PC-3 (cell line): ENCODE measurements at regions of chr9 and their contacts with region 1.

Region 1: DNA sequence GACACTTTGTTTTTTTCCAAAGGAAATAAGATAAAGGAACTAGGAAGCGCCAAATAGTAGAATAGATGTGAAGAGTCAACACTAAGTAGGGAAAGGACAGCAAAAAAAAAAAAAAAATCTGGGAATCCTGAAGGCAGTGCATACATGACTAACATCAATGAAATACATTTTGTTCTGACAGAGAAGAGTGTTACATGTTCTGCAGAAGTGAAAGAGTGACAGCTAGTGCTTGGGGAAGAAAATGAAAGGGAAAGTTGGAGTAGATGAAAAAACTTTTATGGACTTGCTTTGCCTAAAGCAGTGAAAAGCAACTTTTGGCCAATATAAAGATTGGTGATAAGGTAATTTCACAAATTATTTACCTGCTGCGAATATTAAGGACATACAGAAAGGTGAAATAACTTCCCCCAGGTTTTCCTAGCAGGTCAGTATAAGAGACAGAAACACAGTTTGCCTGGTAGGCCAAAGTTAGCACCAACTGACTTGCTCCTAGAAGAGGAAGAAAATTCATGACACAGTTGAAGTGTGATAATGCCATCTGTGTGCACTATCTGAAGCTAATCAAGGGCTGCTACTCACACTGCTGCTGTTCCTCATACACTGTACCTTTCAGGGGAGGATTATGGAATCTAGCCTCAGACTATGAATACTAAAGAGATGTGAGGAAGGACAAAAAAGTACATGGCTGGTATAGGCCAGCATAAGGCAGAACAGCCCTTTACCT is 38.6 kb downstream of the RANBP6 start:
- DNase-seq: no peak
- ATAC-seq: peak; percentile 35; the same call in 1 of the 2 replicates
- H3K4me3 ChIP-seq: no peak overlapping the region
- H3K27ac ChIP-seq: no peak overlapping the region
- H3K4me1 ChIP-seq: peaks cover 3% of the 10 kb centered on the region
- H3K27me3 ChIP-seq: no peaks in the 10 kb centered on the region
- CTCF ChIP-seq: no peak

Region 2: GRCh38 chr9:5817869-5818268 is 159.0 kb before region 1 on chr9:
- CTCF ChIA-PET with region 1: no interaction called
- POLR2A ChIA-PET with region 1: no interaction called
- intact Hi-C with region 1: no loop called
- DNase-seq: peak; percentile 79
- ATAC-seq: peak; percentile 74
- H3K4me3 ChIP-seq: no peak overlapping the region
- H3K27ac ChIP-seq: peak overlapping the region; percentile 76
- H3K4me1 ChIP-seq: peaks cover 49% of the 10 kb centered on the region
- H3K27me3 ChIP-seq: no peaks in the 10 kb centered on the region
- CTCF ChIP-seq: no peak

Region 3: DNA sequence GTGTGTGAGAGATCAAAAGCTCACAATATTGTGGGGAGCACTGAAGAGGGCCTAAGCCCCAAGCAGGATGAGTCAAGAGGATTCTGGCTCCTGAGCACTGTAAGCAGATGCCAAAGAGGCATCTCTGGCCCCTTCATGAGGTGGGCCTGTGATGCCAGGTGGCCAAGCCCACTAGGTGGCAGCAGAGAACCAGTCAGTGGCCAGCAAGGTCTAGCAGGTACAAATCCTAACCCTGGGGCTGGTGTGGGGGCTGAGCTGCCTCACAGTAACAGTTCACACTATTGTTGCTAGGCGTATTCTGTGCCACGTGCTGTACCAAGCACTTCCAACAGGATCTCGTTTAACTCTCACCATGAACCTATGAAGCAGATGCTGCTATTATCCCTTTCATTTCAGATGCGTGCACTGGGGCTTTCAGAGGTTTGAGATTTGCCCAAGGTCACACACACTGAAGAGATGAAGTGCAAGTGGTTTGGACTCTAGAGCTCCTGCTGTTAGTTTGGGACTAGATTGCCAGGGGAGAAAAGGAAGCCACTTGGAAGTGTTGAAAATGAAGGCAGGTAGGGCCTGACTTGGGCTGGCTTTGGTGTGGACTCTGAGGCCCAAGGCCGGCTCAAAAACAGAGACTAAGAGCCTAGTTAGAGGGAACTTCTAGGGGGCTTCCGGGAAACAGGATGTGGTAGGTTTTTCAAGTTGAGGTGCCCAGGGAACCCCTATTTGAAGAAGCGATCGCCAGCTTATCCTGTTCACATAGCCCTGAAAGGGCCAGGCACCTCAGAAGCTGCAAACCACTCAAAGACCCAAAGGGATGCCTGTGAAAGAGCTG is 90.5 kb before region 1 on chr9:
- CTCF ChIA-PET with region 1: no interaction called
- POLR2A ChIA-PET with region 1: no interaction called
- intact Hi-C with region 1: loop called (anchors 2 kb)
- DNase-seq: peak; percentile 73
- ATAC-seq: peak; percentile 97
- H3K4me3 ChIP-seq: no peak overlapping the region
- H3K27ac ChIP-seq: no peak overlapping the region
- H3K4me1 ChIP-seq: peaks cover 10% of the 10 kb centered on the region; the same call in 1 of the 2 replicates
- H3K27me3 ChIP-seq: no peaks in the 10 kb centered on the region
- CTCF ChIP-seq: peak; percentile 88